HEK293 (cell line): ENCODE measurements at regions of chr17 and their contacts with region 1.

Region 1: DNA sequence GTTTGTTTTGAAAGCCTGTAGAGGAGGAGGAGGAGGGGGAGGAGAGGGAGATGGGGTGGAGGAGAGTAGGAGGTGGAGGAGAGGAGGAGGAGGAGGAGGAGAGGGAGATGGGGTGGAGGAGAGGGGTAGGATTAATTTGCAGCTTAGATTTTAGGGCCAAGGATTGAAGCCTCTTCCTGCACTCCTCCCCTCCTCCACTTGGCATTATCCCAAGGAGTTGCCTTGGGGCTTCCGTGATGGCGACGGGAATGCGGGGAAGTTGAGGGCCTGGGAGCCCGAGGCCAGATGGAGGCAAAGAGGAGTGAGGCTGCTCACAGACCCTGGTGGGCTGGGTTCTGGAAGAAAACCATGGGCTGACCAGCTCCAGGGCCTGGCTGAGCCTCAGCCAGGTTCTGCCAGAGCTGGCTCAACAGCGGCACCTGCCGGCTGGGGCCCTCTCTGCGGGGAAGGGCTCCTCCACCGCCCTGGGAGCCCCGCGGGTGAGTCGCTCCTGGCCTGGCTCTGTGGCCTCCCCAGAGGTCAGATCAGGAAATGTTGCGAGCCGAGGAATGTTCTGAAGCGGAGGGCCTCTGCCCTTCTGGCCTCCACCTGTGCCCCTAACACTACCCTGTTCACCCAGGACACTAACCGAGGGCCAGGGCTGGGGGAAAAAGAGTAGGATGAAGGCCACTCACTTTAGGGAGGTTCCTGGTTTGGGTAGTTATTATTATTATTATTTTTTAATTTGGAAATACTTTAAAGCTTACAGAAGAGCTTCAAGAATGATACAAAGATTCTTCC is 23.9 kb upstream of the FMNL1 start:
- H3K4me3 ChIP-seq: no peak overlapping the region
- H3K27ac ChIP-seq: peak overlapping the region; percentile 34
- H3K4me1 ChIP-seq: peaks cover 6% of the 10 kb centered on the region
- CTCF ChIP-seq: peak; percentile 99

Region 2: DNA sequence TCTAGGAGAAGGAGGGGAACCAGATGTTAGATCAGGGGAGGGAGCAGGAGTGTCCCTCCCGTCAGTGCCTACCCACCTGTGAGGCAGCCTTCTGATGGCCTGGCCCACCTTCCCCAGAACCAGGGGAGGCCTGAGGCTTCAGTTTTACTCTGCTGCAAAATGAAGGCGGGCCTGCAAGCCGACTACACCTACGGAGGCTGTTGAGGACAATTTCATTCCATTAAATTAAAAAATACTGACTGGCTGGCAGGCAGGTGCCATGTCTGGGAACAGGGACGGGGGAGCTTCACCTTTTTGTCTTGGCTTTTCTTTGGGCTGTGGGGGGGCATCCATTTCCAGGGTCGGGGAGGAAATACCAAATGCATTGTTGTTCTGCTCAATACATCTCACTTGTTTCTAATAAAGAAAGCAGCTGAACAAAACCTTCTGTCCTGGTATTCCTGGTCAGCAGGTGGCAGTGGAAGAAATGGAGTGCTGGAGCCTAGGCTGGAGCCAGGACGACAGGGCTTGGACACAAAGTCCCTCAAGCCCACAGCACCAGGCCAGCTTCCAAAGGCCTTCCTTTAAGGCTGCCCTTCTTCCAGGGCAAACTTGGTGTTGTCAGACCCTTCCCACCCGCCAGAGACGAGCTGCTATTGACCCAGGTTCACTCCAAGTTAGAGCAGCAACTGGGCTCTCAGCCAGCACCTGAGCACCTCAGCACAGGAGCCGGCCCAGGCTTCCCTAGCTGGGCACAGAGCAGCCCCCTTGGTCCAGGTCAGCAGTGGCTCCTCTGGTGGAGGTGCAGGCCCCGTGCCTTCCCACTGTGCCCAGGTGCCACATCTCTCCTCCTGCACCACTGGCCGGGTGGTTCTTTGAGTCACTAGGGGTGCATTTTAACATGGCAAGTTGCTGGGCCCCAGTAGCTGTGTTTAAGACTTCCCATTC is 88.9 kb before region 1 on chr17:
- CTCF ChIA-PET with region 1: interaction called, 10 read pairs
- POLR2A ChIA-PET with region 1: no interaction called
- H3K4me3 ChIP-seq: no peak overlapping the region
- H3K27ac ChIP-seq: peak overlapping the region; percentile 4; the same call in 1 of the 2 replicates
- H3K4me1 ChIP-seq: no peaks in the 10 kb centered on the region
- CTCF ChIP-seq: no peak

Region 3: GRCh38 chr17:45155029-45155428 is 42.7 kb before region 1 on chr17:
- CTCF ChIA-PET with region 1: interaction called, 185 read pairs
- POLR2A ChIA-PET with region 1: interaction called, 213 read pairs
- H3K4me3 ChIP-seq: no peak overlapping the region
- H3K27ac ChIP-seq: no peak overlapping the region
- H3K4me1 ChIP-seq: peaks cover 19% of the 10 kb centered on the region
- CTCF ChIP-seq: no peak

Region 4: GRCh38 chr17:45172454-45173286 is 25.1 kb before region 1 on chr17:
- CTCF ChIA-PET with region 1: interaction called, 37 read pairs
- POLR2A ChIA-PET with region 1: interaction called, 4 read pairs
- H3K4me3 ChIP-seq: no peak overlapping the region
- H3K27ac ChIP-seq: peak overlapping the region; percentile 34
- H3K4me1 ChIP-seq: peaks cover 23% of the 10 kb centered on the region
- CTCF ChIP-seq: 0 out of 2 replicates have a peak, but pooled peaks have one; percentile 41

Region 5: GRCh38 chr17:45218895-45219661 is 21.3 kb after region 1 on chr17:
- CTCF ChIA-PET with region 1: interaction called, 26 read pairs
- POLR2A ChIA-PET with region 1: no interaction called
- H3K4me3 ChIP-seq: no peak overlapping the region
- H3K27ac ChIP-seq: no peak overlapping the region
- H3K4me1 ChIP-seq: no peaks in the 10 kb centered on the region; the same call in 1 of the 2 replicates
- CTCF ChIP-seq: peak; percentile 83